IMR-90 (cell line): ENCODE measurements at regions of chr5 and their contacts with region 1.

Region 1: GRCh38 chr5:32232441-32233219 is 58.5 kb upstream of the GOLPH3 start:
- DNase-seq: peak; percentile 63
- ATAC-seq: peak; percentile 88
- H3K4me3 ChIP-seq: no peak overlapping the region
- H3K27ac ChIP-seq: no peak overlapping the region
- H3K4me1 ChIP-seq: peaks cover 9% of the 10 kb centered on the region
- H3K27me3 ChIP-seq: no peaks in the 10 kb centered on the region
- CTCF ChIP-seq: peak; percentile 74
- POLR2A ChIP-seq: no peak
- RAD21 ChIP-seq: peak; percentile 77

Region 2: DNA sequence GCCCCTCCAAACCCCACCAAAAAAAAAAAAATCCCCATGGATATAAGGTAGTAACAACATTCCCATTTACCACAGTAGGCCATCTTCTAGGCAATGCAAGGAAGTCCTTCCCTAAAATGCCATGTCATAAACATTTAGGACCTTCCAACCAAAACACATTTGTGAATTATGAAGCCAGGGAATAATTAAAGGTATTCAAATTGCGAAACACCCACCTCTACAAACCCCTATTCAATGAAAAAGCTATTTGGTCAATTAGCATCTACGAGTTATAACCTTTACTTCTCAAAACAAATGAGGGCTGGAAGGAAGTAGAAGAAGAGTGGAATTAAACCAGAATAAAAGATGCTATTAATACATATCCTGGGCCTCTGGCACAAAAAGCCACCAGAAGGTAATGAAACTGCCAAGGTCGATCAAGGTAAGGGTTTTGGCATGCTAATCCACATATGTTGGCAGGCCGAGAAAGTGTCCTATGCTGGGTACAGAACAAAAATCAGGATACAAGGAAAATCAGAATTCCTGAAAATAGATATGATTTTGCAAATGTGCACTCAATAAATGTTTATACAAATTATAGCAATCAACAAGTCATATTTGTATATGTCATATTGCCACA is 32.4 kb after region 1 on chr5:
- CTCF ChIA-PET with region 1: no interaction called
- POLR2A ChIA-PET with region 1: no interaction called
- dilution Hi-C with region 1: no loop called
- in situ Hi-C with region 1: no loop called
- intact Hi-C with region 1: no loop called
- DNase-seq: no peak
- ATAC-seq: no peak
- H3K4me3 ChIP-seq: no peak overlapping the region
- H3K27ac ChIP-seq: no peak overlapping the region
- H3K4me1 ChIP-seq: no peaks in the 10 kb centered on the region
- H3K27me3 ChIP-seq: no peaks in the 10 kb centered on the region
- CTCF ChIP-seq: no peak
- POLR2A ChIP-seq: no peak
- RAD21 ChIP-seq: no peak

Region 3: DNA sequence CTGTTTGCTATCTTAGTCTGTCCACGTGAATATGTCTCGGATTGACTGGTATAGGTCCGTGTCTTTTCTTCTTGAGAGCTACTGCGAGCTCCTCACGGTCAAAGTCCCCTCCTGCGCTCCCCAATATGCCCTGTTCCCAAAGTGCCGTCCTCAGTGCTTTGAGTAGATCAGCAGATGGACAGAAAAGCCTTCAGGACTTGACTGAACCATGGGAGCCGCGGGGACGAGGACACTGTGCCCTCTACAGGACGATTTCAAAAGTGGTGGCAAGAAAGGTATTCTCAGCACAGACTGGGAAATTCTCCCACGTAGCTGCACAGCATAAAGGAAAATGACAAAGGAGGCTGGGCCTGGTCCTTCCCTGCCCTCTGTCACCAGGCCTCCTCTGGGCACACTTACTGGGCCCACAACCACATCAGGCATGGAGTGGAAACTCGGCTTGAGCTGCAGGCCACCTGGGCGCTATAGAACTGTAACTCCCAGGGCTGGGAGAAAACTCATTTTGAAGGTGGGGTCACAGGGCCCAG is 96.7 kb after region 1 on chr5:
- CTCF ChIA-PET with region 1: interaction called, 25 read pairs
- POLR2A ChIA-PET with region 1: no interaction called
- dilution Hi-C with region 1: no loop called
- in situ Hi-C with region 1: no loop called
- intact Hi-C with region 1: loop called (anchors 1 kb)
- DNase-seq: peak; percentile 60
- ATAC-seq: peak; percentile 95
- H3K4me3 ChIP-seq: no peak overlapping the region
- H3K27ac ChIP-seq: no peak overlapping the region
- H3K4me1 ChIP-seq: peaks cover 5% of the 10 kb centered on the region; the same call in 1 of the 2 replicates
- H3K27me3 ChIP-seq: no peaks in the 10 kb centered on the region
- CTCF ChIP-seq: peak; percentile 71
- POLR2A ChIP-seq: no peak
- RAD21 ChIP-seq: peak; percentile 82

Region 4: DNA sequence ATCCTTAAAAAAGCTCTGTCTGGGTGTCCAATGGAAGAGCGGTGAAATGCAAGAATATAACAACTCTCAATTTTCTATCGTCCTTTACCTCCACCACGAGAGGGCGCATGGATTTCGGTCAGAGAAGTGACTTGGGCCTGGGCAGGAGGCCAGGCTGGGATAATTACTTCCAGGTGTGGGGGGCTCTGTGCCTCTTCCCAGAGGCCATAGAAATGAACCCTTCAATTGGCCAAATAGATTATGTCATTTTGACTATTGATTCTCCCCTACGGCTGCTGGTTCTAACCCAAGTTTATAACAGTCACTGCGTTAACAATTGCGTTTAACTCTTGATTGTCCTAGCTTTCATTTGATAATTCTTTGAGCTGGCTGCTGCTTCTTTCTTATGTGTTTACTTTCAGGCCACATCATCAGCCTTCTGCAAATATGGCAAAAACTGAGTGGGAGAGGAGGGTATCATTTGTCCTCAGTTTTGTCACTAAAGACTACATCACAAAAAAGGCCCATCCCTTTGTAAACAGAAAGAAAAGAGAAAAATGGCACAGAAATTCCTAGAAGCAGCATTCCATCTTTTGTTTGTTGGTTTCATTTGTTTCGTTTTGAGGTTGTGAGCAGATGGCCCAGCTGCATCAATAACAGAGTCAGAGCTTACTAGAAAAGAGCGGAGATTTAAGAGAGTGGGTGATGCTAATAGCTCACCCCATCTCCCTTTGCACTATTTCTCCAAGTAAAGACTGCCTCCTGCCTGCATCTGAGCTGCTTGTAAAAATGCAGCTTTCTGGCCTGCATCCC is 257.4 kb after region 1 on chr5:
- CTCF ChIA-PET with region 1: interaction called, 3 read pairs
- POLR2A ChIA-PET with region 1: no interaction called
- dilution Hi-C with region 1: no loop called
- in situ Hi-C with region 1: no loop called
- intact Hi-C with region 1: loop called (anchors 5 kb)
- DNase-seq: peak; percentile 87
- ATAC-seq: peak; percentile 86
- H3K4me3 ChIP-seq: no peak overlapping the region
- H3K27ac ChIP-seq: peak overlapping the region; percentile 53; the same call in 1 of the 2 replicates
- H3K4me1 ChIP-seq: no peaks in the 10 kb centered on the region
- H3K27me3 ChIP-seq: no peaks in the 10 kb centered on the region
- CTCF ChIP-seq: peak; percentile 78
- POLR2A ChIP-seq: no peak
- RAD21 ChIP-seq: peak; percentile 81

Region 5: DNA sequence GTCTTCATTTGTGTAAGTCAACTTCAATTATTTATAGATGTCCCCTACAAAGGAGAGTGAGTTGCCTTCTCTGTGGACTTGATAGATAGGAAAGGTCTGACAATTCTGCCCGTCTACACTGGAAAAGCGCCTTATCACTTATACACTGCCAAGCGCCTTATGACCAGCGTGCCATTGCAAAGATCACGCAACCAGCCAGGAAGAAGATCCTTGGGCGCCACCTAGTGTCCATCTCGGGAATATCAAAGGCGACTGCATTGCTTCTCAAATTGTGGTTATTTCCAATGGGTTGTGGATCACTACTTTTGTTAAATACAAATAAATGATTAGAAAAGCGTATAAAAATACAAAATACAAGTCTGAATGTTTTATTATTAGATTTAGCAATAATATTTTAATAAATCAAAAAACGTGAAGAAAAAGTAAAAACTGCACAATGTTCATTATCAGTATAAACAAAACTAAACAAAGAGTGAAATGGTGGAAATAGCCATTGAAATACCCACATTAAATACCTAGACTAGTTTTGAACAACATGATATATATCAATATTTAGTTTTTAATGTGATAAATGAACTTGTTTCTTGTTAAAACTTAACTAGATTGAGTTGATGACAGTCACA is 380.5 kb after region 1 on chr5:
- CTCF ChIA-PET with region 1: no interaction called
- POLR2A ChIA-PET with region 1: no interaction called
- dilution Hi-C with region 1: no loop called
- in situ Hi-C with region 1: no loop called
- intact Hi-C with region 1: loop called (anchors 1 kb)
- DNase-seq: peak; percentile 75
- ATAC-seq: peak; percentile 87
- H3K4me3 ChIP-seq: no peak overlapping the region
- H3K27ac ChIP-seq: no peak overlapping the region
- H3K4me1 ChIP-seq: peaks cover 3% of the 10 kb centered on the region
- H3K27me3 ChIP-seq: no peaks in the 10 kb centered on the region
- CTCF ChIP-seq: peak; percentile 91
- POLR2A ChIP-seq: 0 out of 2 replicates have a peak, but pooled peaks have one; percentile 29
- RAD21 ChIP-seq: peak; percentile 93

Region 6: DNA sequence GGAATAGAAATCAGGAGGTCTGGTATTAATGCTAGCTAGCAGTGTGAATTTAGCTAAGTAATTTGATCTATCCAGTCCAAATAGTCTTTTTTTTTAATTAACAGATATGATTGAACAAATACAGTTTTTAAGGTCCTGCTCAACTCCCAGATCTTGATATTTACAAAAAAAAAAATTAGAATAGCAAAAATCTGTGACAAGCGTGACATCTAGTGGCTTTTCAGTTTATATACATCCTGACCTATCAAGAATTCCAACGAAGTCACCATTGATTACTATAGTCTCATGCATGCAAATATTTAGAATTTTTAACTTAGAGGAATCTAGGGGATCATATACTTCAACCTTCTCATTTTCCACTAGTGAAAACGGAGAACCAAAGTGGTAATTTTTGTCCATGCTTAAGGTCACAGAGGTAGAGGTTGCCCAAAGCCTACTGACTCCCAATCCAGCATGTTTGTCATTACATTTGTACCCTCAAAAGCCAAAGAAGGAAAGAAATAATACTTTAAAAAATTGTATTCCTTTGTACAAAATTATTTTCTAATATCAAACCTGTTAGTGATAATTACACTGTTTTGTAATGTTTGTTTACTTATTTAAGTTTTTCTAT is 1190.5 kb after region 1 on chr5:
- CTCF ChIA-PET with region 1: no interaction called
- POLR2A ChIA-PET with region 1: no interaction called
- dilution Hi-C with region 1: no loop called
- in situ Hi-C with region 1: no loop called
- intact Hi-C with region 1: loop called (anchors 5 kb)
- DNase-seq: peak; percentile 73
- ATAC-seq: peak; percentile 79
- H3K4me3 ChIP-seq: no peak overlapping the region
- H3K27ac ChIP-seq: no peak overlapping the region
- H3K4me1 ChIP-seq: no peaks in the 10 kb centered on the region; the same call in 1 of the 2 replicates
- H3K27me3 ChIP-seq: no peaks in the 10 kb centered on the region
- CTCF ChIP-seq: peak; percentile 66
- POLR2A ChIP-seq: no peak
- RAD21 ChIP-seq: peak; percentile 71